ENCODE measurements at regions of chr5 and their contacts with region 1.

Region 1: DNA sequence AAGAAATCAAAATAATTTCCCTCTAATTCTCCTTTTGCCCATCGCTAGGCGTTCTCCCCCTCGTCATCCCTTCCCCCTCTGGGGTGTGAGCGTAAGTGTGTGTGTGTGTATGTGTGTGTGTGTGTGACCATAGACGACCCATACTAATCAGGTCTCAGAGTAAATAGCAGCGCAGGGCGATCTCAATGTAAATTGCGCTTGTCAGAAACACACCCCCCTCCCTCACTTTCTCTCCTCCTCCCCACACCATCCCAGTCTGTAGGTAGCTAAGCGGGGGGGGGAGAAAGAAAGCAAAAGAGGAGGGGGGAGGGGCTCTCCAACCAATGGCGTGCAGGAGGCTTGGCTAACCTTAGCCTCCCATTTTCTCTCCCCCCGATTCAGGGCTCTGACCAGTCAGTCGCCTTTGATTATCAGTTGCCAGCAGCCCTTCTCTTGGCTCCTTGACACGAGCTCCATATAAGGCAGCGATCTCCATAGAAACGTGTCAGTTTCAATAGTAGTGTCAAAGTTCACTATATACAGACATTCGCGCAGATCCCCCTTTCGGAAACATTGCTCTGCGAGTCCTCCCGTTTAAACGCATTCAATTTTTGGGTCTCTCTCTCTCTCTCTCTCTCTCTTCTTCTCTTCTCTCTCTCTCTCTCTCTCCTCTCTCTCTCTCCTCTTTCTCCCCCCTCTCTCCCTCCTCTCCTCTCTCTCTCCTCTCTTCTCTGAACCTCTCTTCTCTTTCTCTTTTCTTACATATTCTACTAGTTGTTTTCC is at the start of gene NR2F1:
- DNase-seq: peak; percentile 18
- ATAC-seq: no peak
- H3K4me3 Mint-ChIP-seq: no peak within 1 kb of the TSS
- H3K27ac Mint-ChIP-seq: no peak within 1 kb of the TSS
- H3K4me1 Mint-ChIP-seq: peaks cover 28% of the 10 kb centered on the region
- H3K27me3 Mint-ChIP-seq: peaks cover 39% of the 10 kb centered on the region
- total RNA-seq, gene NR2F1: not detected

Region 2: GRCh38 chr5:93311881-93312280 is 271.0 kb before region 1 on chr5:
- CTCF ChIA-PET with region 1: no interaction called
- POLR2A ChIA-PET with region 1: no interaction called
- intact Hi-C with region 1: no loop called
- DNase-seq: no peak
- ATAC-seq: no peak
- H3K4me3 Mint-ChIP-seq: no peak overlapping the region
- H3K27ac Mint-ChIP-seq: no peak overlapping the region
- H3K4me1 Mint-ChIP-seq: no peaks in the 10 kb centered on the region
- H3K27me3 Mint-ChIP-seq: no peaks in the 10 kb centered on the region

Region 3: DNA sequence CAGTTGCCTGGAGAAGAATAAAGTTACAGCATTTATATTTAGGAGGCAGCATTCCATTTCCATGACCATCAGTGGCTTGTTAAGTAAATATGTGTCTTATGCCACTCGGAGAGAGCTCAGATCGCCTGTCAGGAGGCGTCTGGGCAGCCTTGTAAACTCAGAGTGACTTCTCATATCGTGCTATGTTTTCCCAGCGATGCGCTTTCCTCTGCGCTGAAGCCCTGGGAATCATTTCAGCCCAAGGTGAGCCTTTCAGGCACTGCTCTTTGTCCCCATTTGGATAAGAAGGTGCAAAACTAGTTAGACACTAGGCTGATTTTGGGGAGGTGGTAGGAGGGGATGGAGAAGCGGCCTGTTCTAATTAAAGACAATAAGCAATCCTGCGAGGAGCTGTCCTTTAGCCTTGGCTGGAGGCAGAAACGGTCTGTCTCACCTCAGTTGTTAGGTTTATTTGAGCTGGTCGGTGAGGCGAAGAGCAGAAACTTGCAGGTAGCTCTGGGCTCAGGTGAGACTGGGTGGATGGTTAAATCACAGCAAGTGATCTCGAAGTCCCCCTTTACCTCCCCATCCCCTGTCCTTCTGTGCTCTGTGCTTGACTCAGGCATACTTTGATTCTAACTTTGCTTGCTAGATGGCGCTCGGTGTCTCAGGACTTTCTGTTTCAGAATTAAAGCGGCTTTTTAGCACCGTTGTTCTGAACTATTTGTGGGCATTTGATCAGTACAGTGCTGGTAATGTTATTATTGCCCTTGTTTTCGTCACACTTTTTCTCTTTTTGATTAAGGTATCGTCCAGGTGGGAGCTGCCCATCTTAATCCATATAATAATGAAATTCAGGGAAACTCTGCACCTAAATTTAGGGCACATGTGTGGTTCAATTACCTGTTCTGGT is 24.8 kb after region 1 on chr5:
- CTCF ChIA-PET with region 1: interaction called, 7 read pairs
- POLR2A ChIA-PET with region 1: interaction called, 3 read pairs
- intact Hi-C with region 1: loop called (anchors 2 kb)
- DNase-seq: peak; percentile 53
- ATAC-seq: peak; percentile 81
- H3K4me3 Mint-ChIP-seq: no peak overlapping the region
- H3K27ac Mint-ChIP-seq: no peak overlapping the region
- H3K4me1 Mint-ChIP-seq: peaks cover 21% of the 10 kb centered on the region
- H3K27me3 Mint-ChIP-seq: peaks cover 82% of the 10 kb centered on the region

Region 4: DNA sequence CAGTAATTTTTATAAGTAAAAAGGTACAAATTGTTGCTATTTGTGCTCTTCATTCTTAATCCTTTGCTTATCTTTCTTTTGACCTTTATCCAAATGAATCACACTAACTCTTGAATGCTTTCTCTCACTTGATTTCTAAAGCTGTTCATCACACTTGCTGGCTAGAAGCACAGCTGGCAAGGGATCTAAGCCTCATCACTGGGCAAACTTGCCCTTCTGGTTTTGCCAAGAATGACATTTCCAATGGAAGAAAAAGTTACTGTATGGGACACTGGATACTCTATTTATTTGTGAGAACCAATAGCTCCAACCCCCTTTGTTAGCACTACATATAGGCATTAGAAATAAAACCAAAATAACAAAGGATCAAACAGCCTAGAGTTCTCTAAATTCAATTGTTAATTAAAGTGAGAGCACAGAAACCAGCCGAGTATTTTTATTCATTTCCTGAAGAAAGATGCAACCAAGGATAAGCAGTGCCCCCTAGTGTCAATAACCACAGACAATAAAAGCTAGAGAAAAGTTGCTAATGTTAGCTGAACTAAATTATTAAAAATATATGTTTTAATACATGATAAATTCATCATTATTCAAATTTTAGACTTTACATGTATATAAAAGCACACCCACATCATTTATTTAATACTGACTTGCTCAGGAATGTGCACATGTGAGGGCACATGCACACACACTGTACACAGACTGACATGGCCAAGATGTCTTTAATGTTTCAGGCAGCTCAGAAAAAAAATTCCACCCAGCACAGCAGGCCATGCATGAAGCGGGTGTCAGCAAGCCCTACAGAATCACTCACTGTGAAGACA is 218.3 kb after region 1 on chr5:
- CTCF ChIA-PET with region 1: interaction called, 10 read pairs
- POLR2A ChIA-PET with region 1: no interaction called
- intact Hi-C with region 1: loop called (anchors 1 to 2 kb)
- DNase-seq: peak; percentile 11
- ATAC-seq: no peak
- H3K4me3 Mint-ChIP-seq: no peak overlapping the region
- H3K27ac Mint-ChIP-seq: no peak overlapping the region
- H3K4me1 Mint-ChIP-seq: no peaks in the 10 kb centered on the region
- H3K27me3 Mint-ChIP-seq: no peaks in the 10 kb centered on the region

Region 5: GRCh38 chr5:94618493-94619328 is 1035.9 kb after region 1 on chr5 and contains the starts of genes KIAA0825 and SLF1:
- CTCF ChIA-PET with region 1: no interaction called
- POLR2A ChIA-PET with region 1: no interaction called
- intact Hi-C with region 1: loop called in 1 of 2 experiments (anchors 10 kb)
- DNase-seq: peak; percentile 94
- ATAC-seq: peak; percentile 90
- H3K4me3 Mint-ChIP-seq: peak within 1 kb of the TSS; percentile 84
- H3K27ac Mint-ChIP-seq: peak within 1 kb of the TSS; percentile 95
- H3K4me1 Mint-ChIP-seq: peaks cover 36% of the 10 kb centered on the region
- H3K27me3 Mint-ChIP-seq: no peaks in the 10 kb centered on the region
- total RNA-seq, gene KIAA0825: 1.1 to 1.3 TPM
- total RNA-seq, gene SLF1: 13.3 to 13.6 TPM

Region 6: GRCh38 chr5:94849821-94850736 is 1267.2 kb after region 1 on chr5:
- CTCF ChIA-PET with region 1: no interaction called
- POLR2A ChIA-PET with region 1: no interaction called
- intact Hi-C with region 1: loop called in 1 of 2 experiments (anchors 2 kb)
- DNase-seq: peak; percentile 43
- ATAC-seq: peak; percentile 87
- H3K4me3 Mint-ChIP-seq: no peak overlapping the region
- H3K27ac Mint-ChIP-seq: no peak overlapping the region
- H3K4me1 Mint-ChIP-seq: peaks cover 8% of the 10 kb centered on the region
- H3K27me3 Mint-ChIP-seq: no peaks in the 10 kb centered on the region

Region 7: DNA sequence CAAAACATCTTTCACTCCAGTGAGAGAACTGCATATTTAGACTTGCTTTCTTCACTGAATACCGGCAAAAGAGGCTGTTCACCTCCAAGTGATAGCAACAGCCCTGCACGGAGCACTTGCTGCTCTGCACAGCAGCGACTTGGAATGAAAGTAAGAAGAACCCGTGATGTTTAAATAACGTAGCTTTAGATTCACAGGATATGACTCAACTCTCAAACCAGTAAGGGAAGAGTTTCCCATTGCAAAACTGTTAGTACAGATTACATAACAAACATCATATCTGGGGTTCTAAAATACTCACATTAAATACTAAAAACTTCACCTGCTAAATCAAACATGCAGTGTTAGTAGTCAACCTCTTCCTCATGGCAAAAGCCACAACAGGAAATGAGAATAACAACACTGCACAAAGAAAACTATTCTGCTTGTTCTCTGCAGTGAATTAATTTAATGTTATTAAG is 1498.7 kb after region 1 on chr5:
- CTCF ChIA-PET with region 1: no interaction called
- POLR2A ChIA-PET with region 1: no interaction called
- intact Hi-C with region 1: no loop called
- DNase-seq: peak; percentile 56
- ATAC-seq: peak; percentile 99
- H3K4me3 Mint-ChIP-seq: peak overlapping the region; percentile 30
- H3K27ac Mint-ChIP-seq: no peak overlapping the region
- H3K4me1 Mint-ChIP-seq: peaks cover 13% of the 10 kb centered on the region
- H3K27me3 Mint-ChIP-seq: peaks cover 7% of the 10 kb centered on the region